ENCODE measurements at regions of chrX and their contacts with region 1.

Region 1: DNA sequence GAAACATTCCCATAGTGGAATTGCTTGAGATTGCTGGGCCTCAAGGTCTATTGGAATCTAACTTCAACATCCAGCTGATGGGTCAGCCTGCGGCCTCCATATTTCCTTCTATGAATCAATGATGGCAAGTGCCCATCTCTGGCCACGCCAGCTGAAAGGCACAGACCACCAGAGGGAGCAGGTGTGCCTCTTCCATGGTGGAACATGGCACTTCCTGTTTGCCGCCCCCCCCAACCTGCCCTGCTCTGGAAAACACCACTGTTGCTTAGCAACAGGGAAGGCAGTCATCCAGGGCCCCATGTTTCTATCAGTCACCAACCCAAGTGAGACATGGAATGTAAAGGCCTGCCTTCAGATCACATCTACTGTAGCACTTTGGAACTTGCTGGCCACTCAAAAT is 11.6 kb downstream of the PAGE4 start:
- DNase-seq: peak; percentile 79
- H3K4me3 Mint-ChIP-seq: no peak overlapping the region
- H3K27ac Mint-ChIP-seq: no peak overlapping the region
- H3K4me1 Mint-ChIP-seq: peaks cover 2% of the 10 kb centered on the region
- H3K27me3 Mint-ChIP-seq: no peaks in the 10 kb centered on the region

Region 2: GRCh38 chrX:49191033-49191871 is 649.4 kb before region 1 on chrX:
- CTCF ChIA-PET with region 1: no interaction called
- intact Hi-C with region 1: loop called (anchors 10 kb)
- DNase-seq: peak; percentile 89
- H3K4me3 Mint-ChIP-seq: peak overlapping the region; percentile 97
- H3K27ac Mint-ChIP-seq: peak overlapping the region; percentile 94
- H3K4me1 Mint-ChIP-seq: peaks cover 25% of the 10 kb centered on the region
- H3K27me3 Mint-ChIP-seq: no peaks in the 10 kb centered on the region

Region 3: GRCh38 chrX:49291615-49292337 is 548.9 kb before region 1 on chrX:
- CTCF ChIA-PET with region 1: interaction called, 3 read pairs
- intact Hi-C with region 1: loop called (anchors 5 kb)
- DNase-seq: peak; percentile 88
- H3K4me3 Mint-ChIP-seq: no peak overlapping the region
- H3K27ac Mint-ChIP-seq: no peak overlapping the region
- H3K4me1 Mint-ChIP-seq: peaks cover 35% of the 10 kb centered on the region
- H3K27me3 Mint-ChIP-seq: no peaks in the 10 kb centered on the region

Region 4: GRCh38 chrX:49761481-49761880 is 79.2 kb before region 1 on chrX:
- CTCF ChIA-PET with region 1: interaction called, 6 read pairs
- intact Hi-C with region 1: loop called (anchors 1 kb)
- DNase-seq: peak; percentile 10
- H3K4me3 Mint-ChIP-seq: no peak overlapping the region
- H3K27ac Mint-ChIP-seq: no peak overlapping the region
- H3K4me1 Mint-ChIP-seq: no peaks in the 10 kb centered on the region
- H3K27me3 Mint-ChIP-seq: no peaks in the 10 kb centered on the region

Measured in activated naive CD4-positive, alpha-beta T cell treated with anti-CD3 and anti-CD28 coated beads for 36 hours (primary cell).